ENCODE measurements at regions of chr5 and their contacts with region 1.

Region 1: GRCh38 chr5:175729829-175730277 is 72.0 kb downstream of the HRH2 start:
- DNase-seq: peak; percentile 94
- H3K4me3 Mint-ChIP-seq: no peak overlapping the region
- H3K27ac Mint-ChIP-seq: no peak overlapping the region
- H3K4me1 Mint-ChIP-seq: peaks cover 9% of the 10 kb centered on the region
- H3K27me3 Mint-ChIP-seq: no peaks in the 10 kb centered on the region
- CTCF ChIP-seq: peak; percentile 100

Region 2: GRCh38 chr5:175162036-175162435 is 567.8 kb before region 1 on chr5:
- CTCF ChIA-PET with region 1: no interaction called
- POLR2A ChIA-PET with region 1: no interaction called
- intact Hi-C with region 1: no loop called
- DNase-seq: no peak
- H3K4me3 Mint-ChIP-seq: no peak overlapping the region
- H3K27ac Mint-ChIP-seq: no peak overlapping the region
- H3K4me1 Mint-ChIP-seq: no peaks in the 10 kb centered on the region
- H3K27me3 Mint-ChIP-seq: peaks cover 36% of the 10 kb centered on the region
- CTCF ChIP-seq: no peak

Region 3: GRCh38 chr5:175534070-175534932 is 195.6 kb before region 1 on chr5:
- CTCF ChIA-PET with region 1: interaction called, 89 read pairs
- POLR2A ChIA-PET with region 1: interaction called, 6 read pairs
- intact Hi-C with region 1: no loop called
- DNase-seq: peak; percentile 83
- H3K4me3 Mint-ChIP-seq: no peak overlapping the region
- H3K27ac Mint-ChIP-seq: no peak overlapping the region
- H3K4me1 Mint-ChIP-seq: no peaks in the 10 kb centered on the region
- H3K27me3 Mint-ChIP-seq: no peaks in the 10 kb centered on the region
- CTCF ChIP-seq: peak; percentile 100

Region 4: DNA sequence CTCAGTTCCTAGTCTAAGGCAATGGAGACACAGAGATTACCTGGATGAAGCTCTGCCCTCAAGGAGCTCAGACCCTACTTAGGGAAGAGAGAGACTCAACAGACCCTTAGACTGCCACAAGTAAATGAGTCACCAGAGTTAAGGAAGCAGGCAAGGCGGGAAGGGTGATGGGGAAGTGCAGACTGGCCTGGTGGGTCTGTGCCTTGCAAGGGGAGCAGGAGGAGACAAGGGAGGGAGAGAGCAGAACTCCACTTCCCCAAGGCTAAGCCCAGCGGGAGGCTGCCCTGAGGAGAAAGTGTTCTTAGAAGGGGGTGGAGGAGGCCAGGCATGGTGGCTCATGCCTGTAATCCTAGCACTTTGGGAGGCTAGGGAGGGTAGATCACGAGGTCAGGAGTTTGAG is 11.7 kb after region 1 on chr5:
- CTCF ChIA-PET with region 1: interaction called, 80 read pairs
- POLR2A ChIA-PET with region 1: interaction called, 5 read pairs
- intact Hi-C with region 1: no loop called
- DNase-seq: no peak
- H3K4me3 Mint-ChIP-seq: no peak overlapping the region
- H3K27ac Mint-ChIP-seq: no peak overlapping the region
- H3K4me1 Mint-ChIP-seq: peaks cover under 1% of the 10 kb centered on the region
- H3K27me3 Mint-ChIP-seq: peaks cover 52% of the 10 kb centered on the region
- CTCF ChIP-seq: no peak

Region 5: GRCh38 chr5:175789670-175790069 is 59.8 kb after region 1 on chr5:
- CTCF ChIA-PET with region 1: interaction called, 12 read pairs
- POLR2A ChIA-PET with region 1: interaction called, 3 read pairs
- intact Hi-C with region 1: no loop called
- DNase-seq: no peak
- H3K4me3 Mint-ChIP-seq: no peak overlapping the region
- H3K27ac Mint-ChIP-seq: no peak overlapping the region
- H3K4me1 Mint-ChIP-seq: peaks cover 12% of the 10 kb centered on the region
- H3K27me3 Mint-ChIP-seq: peaks cover 74% of the 10 kb centered on the region
- CTCF ChIP-seq: no peak

Region 6: DNA sequence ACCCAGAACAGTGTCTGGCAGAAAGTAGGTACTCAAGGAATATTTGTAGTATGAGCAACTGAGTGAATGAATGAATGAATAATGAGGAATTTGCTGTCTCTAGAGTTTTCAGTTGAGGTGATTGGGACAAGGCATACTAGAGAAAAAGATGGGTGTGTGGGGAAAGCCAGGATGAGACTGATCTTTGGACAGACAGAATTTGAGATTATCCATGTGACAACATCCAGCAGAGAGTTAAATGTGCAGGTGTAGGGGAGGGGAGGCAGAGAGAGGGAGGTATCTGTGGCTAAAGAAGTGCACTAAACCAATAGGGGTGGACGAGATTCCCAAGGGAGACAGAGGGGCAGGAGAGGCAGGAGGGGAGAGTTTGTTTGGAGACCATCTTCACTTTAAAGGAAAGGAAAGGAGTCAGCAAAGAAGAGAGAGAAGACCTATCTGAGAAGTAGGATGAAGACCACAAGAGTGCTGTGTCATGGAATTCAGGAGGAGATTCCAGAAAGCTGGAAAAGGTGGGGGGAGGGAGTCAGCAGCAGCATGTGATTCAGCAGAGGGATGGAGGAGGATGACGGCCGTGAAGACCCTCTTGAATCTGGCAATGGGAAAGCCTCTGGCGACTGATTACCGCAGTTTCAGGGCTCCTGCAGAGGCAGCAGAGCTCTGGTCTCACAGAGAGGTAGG is 144.7 kb after region 1 on chr5:
- CTCF ChIA-PET with region 1: interaction called, 15 read pairs
- POLR2A ChIA-PET with region 1: no interaction called
- intact Hi-C with region 1: no loop called
- DNase-seq: no peak
- H3K4me3 Mint-ChIP-seq: no peak overlapping the region
- H3K27ac Mint-ChIP-seq: no peak overlapping the region
- H3K4me1 Mint-ChIP-seq: no peaks in the 10 kb centered on the region
- H3K27me3 Mint-ChIP-seq: peaks cover 52% of the 10 kb centered on the region
- CTCF ChIP-seq: no peak

Region 7: DNA sequence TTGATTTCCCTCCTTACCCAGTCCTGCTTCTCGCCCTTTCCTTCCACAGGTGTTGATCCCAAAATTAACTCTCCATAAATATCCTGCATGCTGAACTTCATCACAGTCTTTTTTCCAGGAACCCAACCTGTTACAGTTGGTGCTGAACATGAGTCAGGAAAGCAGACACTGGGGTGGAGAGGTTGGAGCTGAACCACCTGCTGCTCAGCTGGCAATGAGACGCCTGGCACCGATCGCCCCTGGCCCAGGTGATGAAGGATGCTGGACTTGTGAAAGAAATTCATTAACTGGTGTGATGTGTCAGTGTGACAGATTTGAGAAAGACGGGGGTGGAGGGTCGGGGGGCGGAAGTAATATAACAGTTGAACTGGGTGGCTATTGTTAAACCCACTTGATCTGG is 172.2 kb after region 1 on chr5:
- CTCF ChIA-PET with region 1: interaction called, 17 read pairs
- POLR2A ChIA-PET with region 1: no interaction called
- intact Hi-C with region 1: loop called (anchors 1 kb)
- DNase-seq: no peak
- H3K4me3 Mint-ChIP-seq: no peak overlapping the region
- H3K27ac Mint-ChIP-seq: no peak overlapping the region
- H3K4me1 Mint-ChIP-seq: no peaks in the 10 kb centered on the region
- H3K27me3 Mint-ChIP-seq: no peaks in the 10 kb centered on the region
- CTCF ChIP-seq: no peak

Measured in MCF 10A (cell line).